A549 (cell line): ENCODE measurements at regions of chr12 and their contacts with region 1.

Region 1: DNA sequence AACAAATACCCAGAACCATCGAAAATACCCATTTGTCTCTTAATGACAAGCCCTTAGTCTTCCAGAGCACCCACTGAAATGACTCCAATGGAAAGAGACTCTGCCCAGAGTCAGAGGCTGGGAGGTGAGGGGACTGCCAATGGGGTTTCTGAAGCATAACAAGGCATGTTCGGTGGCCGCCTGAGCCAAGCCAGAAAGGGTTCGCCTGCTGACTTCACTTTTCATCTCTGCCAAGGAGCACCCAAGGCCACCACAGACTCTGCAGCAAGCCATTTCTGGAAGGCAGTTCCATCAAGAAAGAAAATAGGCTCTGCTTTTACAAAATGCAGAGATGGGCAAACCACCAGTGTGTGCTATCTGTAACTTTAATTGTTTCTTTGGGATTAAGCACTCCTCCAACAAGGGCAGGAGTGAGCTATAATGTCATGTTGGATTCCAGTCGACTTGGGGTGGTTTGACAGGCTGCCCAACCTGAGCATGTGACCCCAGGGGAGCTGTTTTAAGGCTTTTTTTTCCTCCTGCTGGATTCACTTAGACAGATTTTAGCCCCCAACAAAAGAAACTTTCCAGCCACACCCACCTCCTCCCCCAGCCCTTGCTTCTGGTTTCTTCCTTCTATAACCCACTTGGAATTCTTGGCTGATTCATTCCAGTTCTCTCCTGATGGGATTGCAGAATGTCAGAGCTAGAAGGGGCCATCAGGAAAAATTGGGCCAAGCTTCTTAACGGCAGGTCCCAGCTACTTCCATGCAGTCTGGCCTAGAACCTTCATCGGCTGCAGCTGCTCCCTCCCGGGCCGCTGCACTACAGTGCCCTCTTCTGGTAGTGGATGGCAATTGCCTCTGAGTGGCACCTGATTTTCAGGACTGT is 24.1 kb downstream of the CKAP4 start:
- DNase-seq: peak; percentile 64 to 90
- ATAC-seq: peak; percentile 80 to 92
- H3K4me3 ChIP-seq: no peak overlapping the region
- H3K27ac ChIP-seq: no peak overlapping the region
- H3K4me1 ChIP-seq: peaks cover 11% of the 10 kb centered on the region
- CTCF ChIP-seq: peak; percentile 88
- EP300 ChIP-seq: no peak
- POLR2A ChIP-seq: no peak
- RAD21 ChIP-seq: peak; percentile 89 to 95

Region 2: DNA sequence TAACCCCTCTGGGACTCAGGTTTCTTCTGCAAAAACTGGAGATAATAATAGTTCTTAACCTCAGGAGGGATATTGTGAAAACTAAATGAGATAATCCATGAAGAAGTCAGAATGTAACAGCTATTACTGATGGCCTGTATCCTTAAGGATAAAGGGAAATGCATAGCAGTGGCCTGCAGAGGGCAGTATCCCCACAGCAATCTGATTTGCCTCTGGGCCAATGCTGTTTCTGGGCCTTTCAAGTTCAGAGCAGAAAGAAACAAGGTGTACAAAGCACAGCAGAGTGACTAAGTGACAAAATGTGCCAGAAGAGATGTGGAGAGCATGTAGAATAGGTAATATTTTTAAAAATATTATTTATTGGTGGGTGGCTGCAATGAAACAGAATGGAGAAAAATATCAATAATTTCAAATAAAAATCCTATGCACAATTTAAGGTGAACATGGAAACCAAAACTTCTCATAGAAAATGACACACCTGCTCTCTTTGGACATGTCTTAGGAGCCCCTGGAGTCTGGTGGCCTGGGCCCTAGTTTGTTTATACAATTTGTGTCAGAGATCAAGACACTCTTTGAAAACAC is 803.0 kb before region 1 on chr12:
- CTCF ChIA-PET with region 1: interaction called, 27 read pairs
- POLR2A ChIA-PET with region 1: no interaction called
- DNase-seq: peak; percentile 62 to 79
- ATAC-seq: peak; percentile 76 to 88
- H3K4me3 ChIP-seq: no peak overlapping the region
- H3K27ac ChIP-seq: peak overlapping the region in 1 of 2 experiments; percentile 63; a peak in 3 of 6 replicates
- H3K4me1 ChIP-seq: peaks cover 12% of the 10 kb centered on the region; the same call in 1 of the 3 replicates
- CTCF ChIP-seq: peak; percentile 97
- EP300 ChIP-seq: no peak
- POLR2A ChIP-seq: no peak
- RAD21 ChIP-seq: peak; percentile 99 to 100

Region 3: GRCh38 chr12:106239241-106239950 is 15.7 kb after region 1 on chr12:
- CTCF ChIA-PET with region 1: interaction called, 30 read pairs
- POLR2A ChIA-PET with region 1: no interaction called
- DNase-seq: no peak
- ATAC-seq: no peak
- H3K4me3 ChIP-seq: no peak overlapping the region
- H3K27ac ChIP-seq: no peak overlapping the region
- H3K4me1 ChIP-seq: no peaks in the 10 kb centered on the region
- CTCF ChIP-seq: no peak
- EP300 ChIP-seq: no peak
- POLR2A ChIP-seq: no peak
- RAD21 ChIP-seq: no peak

Region 4: DNA sequence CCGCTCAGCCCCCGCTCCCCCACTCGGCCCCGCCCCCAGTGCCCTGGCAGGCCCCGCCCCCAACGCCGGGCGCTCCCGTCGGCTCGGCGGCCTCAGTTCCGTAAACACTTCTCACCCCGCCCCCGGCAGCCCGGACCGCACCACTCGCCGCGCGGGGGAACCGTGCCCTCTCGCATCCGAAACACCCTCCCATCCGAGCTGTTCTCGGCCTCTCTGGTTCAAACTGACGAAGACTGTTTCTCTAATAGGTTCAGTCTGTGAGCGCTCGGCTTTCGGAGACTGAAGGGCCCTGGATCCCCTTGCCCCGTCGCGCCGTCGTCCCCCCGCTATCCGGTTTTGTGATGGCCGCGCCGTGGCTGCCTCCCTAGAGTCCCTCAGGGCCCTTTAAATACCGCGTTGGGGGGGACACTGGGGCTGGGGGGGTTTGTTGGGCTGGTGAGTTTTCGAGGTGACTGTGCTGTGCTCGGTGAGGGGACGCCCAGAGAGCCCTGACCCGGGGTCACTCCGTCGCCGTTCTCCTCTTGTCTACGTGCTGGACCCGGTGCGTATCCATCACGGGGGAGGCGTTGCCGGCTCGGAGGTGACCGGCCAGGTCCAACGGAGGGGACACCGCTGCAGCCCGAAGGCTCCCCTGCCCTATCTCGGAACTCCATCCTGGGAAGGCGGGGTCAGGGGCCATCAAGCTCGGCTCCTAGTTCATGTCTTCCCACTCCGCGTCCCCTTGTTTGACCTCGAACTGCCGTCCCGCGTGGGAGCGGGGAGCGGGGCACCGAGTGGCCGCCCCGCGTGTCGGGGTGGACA is 78.9 kb after region 1 on chr12 and contains the start of gene TCP11L2:
- CTCF ChIA-PET with region 1: interaction called, 12 read pairs
- POLR2A ChIA-PET with region 1: interaction called, 3 read pairs
- DNase-seq: peak; percentile 69 to 83
- ATAC-seq: peak; percentile 84 to 87
- H3K4me3 ChIP-seq: peak within 1 kb of the TSS; percentile 86
- H3K27ac ChIP-seq: peak within 1 kb of the TSS; percentile 98 to 100
- H3K4me1 ChIP-seq: peaks cover 31% of the 10 kb centered on the region
- CTCF ChIP-seq: no peak
- EP300 ChIP-seq: no peak
- POLR2A ChIP-seq: no peak
- RAD21 ChIP-seq: no peak
- polyA plus RNA-seq, gene TCP11L2: 16.6 and 19.7 TPM in 2 replicates

Region 5: DNA sequence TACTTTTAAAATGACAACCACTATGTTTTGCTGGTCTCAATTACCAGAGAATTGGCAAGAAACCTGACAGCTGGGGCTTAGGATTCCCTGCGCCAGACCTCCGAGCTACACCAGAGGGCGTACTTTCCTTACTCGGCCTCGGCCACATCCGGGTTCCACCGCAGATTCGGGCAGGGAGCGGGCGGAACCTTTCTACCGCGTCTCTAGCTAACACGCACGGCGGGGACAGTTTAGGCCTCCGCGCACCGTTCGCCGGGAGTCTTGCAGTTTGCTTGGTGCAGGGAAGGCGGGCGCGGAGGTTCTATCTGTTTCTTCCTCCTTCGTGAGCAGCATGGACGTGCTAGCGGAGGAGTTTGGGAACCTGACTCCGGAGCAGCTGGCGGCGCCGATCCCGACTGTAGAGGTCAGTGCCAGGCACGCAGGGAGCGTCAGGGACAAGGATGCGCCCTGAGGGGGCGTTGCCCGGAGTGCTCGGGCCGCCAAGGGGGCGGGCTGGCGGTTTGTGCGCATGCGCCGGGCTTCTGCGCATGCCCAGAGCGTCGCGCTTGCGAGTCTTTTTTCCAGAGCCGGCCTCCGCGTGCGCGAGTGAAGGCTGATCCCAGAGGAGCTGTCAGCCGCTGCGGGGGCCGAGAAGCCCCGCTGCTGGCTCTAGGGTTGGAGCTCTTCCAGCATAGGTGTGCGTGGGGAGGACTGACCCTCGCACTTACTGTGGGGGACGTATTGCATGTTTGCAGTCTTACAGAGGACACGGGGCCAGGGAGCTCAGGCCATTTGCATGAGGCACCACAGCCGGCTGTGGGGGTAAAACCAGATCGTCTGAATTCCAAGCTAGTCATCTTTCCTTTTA is 134.1 kb after region 1 on chr12 and contains the start of gene POLR3B:
- CTCF ChIA-PET with region 1: interaction called, 42 read pairs
- POLR2A ChIA-PET with region 1: interaction called, 15 read pairs
- DNase-seq: peak; percentile 92 to 98
- ATAC-seq: peak; percentile 95
- H3K4me3 ChIP-seq: peak within 1 kb of the TSS; percentile 66
- H3K27ac ChIP-seq: peak within 1 kb of the TSS; percentile 90 to 92
- H3K4me1 ChIP-seq: peaks cover 15% of the 10 kb centered on the region; the same call in 2 of the 3 replicates
- CTCF ChIP-seq: peak; percentile 89
- EP300 ChIP-seq: no peak
- POLR2A ChIP-seq: peak; percentile 92
- RAD21 ChIP-seq: peak; percentile 77 to 79
- polyA plus RNA-seq, gene POLR3B: 9.5 and 10.7 TPM in 2 replicates

Region 6: DNA sequence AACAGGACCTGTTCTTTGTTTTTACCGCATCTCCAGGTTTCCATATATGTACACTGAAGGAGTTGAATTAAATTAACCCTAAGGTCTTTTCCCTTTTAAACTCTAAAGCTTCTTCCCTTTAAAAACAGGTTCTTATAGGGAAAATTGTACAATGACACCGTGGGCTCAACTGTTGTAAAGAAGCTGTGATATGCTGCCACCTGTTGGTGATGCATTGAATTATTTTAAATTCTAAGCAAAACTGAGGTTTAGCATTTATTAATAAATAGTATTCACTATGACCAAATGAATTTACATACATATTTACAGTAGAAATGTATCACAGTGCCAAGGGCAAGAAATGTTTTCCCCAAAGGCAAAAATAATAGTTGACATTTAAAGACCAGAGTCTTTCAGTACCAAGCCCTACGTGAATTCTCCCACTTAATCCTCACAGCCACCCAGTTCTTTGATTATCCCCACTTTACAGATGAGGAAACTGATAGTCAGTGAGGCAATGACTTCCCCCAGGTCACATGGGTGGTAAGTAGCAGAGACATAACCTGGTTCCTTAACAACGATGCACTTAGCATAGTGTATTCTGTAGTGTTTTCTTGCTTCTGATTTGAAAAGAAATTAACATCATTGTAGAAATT is 696.3 kb after region 1 on chr12:
- CTCF ChIA-PET with region 1: interaction called, 25 read pairs
- POLR2A ChIA-PET with region 1: no interaction called
- DNase-seq: peak; percentile 55 to 59
- ATAC-seq: peak; percentile 44 to 74; a peak in 3 of 6 replicates
- H3K4me3 ChIP-seq: no peak overlapping the region
- H3K27ac ChIP-seq: no peak overlapping the region
- H3K4me1 ChIP-seq: no peaks in the 10 kb centered on the region
- CTCF ChIP-seq: peak; percentile 91
- EP300 ChIP-seq: no peak
- POLR2A ChIP-seq: no peak
- RAD21 ChIP-seq: peak; percentile 86 to 89